Activated CD4-positive, alpha-beta T cell treated with anti-CD3 and anti-CD28 coated beads for 36 hours (primary cell): ENCODE measurements at regions of chr13 and their contacts with region 1.

Region 1: GRCh38 chr13:94549232-94550061 is 46.5 kb downstream of the TGDS start:
- DNase-seq: peak; percentile 96
- ATAC-seq: peak; percentile 94
- H3K4me3 Mint-ChIP-seq: peak overlapping the region; percentile 83
- H3K27ac Mint-ChIP-seq: peak overlapping the region; percentile 97
- H3K4me1 Mint-ChIP-seq: peaks cover 20% of the 10 kb centered on the region
- H3K27me3 Mint-ChIP-seq: peaks cover 3% of the 10 kb centered on the region

Region 2: GRCh38 chr13:94327318-94327717 is 222.1 kb before region 1 on chr13:
- CTCF ChIA-PET with region 1: no interaction called
- POLR2A ChIA-PET with region 1: no interaction called
- intact Hi-C with region 1: loop called in 1 of 2 experiments (anchors 5 kb)
- DNase-seq: no peak
- ATAC-seq: peak; percentile 53
- H3K4me3 Mint-ChIP-seq: no peak overlapping the region
- H3K27ac Mint-ChIP-seq: peak overlapping the region; percentile 37
- H3K4me1 Mint-ChIP-seq: peaks cover 64% of the 10 kb centered on the region
- H3K27me3 Mint-ChIP-seq: peaks cover 10% of the 10 kb centered on the region

Region 3: DNA sequence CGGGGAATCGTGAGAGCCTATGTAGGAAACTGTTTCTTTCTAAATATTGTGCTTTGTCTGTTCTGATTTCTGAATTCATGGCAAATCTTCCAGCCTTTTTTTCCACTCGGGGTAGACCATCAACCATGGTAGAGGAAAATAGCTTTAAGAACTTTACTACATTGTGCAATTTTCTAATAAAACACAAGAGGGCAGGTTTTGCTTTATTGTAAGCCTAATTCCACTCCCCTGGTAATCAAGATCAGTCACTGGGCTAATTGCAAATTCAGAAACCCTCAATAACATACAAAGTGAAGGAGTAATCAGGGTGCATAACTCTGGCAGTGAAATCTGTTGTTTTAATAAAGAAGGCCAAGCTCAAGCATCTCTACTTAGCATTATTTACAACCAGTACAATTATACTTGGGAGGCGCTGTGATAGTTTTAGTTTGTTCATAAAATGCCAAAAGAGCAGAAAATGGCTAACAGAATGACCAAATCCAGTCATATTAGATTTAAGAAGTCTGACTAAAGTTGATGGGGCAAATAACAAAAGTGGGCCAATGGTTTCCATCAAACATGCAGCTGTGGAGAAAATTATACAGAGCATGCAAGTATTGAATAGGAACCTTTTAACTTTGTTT is 113.7 kb before region 1 on chr13:
- CTCF ChIA-PET with region 1: interaction called, 4 read pairs
- POLR2A ChIA-PET with region 1: no interaction called
- intact Hi-C with region 1: loop called (anchors 2 to 5 kb)
- DNase-seq: no peak
- ATAC-seq: peak; percentile 65
- H3K4me3 Mint-ChIP-seq: no peak overlapping the region
- H3K27ac Mint-ChIP-seq: no peak overlapping the region
- H3K4me1 Mint-ChIP-seq: peaks cover 33% of the 10 kb centered on the region
- H3K27me3 Mint-ChIP-seq: no peaks in the 10 kb centered on the region

Region 4: DNA sequence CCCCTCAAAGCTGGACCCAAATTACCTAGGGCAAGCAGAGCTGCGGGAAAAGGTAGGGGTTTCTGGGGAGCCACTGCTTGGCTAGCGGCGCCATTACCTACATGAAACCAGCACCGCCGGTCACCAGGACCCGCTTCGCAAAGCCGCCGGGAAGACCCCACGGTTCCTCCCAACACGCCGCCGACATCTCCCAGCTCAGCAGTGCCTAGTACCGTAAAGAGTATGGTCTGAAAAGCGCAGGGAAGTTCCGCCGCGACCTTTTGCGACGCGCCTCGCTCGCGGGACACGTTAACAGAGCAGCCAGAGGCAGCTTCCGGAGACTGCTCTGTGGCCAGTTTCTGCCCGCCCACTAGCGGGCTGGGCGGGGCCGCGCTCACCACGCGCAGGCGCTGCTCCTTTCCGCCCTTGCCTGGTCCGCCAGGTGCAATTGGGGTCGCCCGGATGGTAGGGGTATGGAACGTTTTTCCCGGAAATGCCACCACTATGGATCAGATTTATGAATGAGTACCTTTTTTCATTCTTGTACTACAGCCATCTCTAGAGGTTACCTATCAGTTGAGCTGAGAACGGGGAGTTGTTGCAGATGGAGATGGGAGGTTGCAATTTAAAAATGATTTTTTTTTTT is 46.6 kb after region 1 on chr13 and contains the start of gene TGDS:
- CTCF ChIA-PET with region 1: interaction called, 5 read pairs
- POLR2A ChIA-PET with region 1: interaction called, 8 read pairs
- intact Hi-C with region 1: loop called (anchors 1 kb)
- DNase-seq: peak; percentile 95
- ATAC-seq: peak; percentile 96
- H3K4me3 Mint-ChIP-seq: peak within 1 kb of the TSS; percentile 88
- H3K27ac Mint-ChIP-seq: peak within 1 kb of the TSS; percentile 96
- H3K4me1 Mint-ChIP-seq: peaks cover 36% of the 10 kb centered on the region
- H3K27me3 Mint-ChIP-seq: no peaks in the 10 kb centered on the region
- total RNA-seq, gene TGDS: 23.4 to 24.2 TPM

Region 5: DNA sequence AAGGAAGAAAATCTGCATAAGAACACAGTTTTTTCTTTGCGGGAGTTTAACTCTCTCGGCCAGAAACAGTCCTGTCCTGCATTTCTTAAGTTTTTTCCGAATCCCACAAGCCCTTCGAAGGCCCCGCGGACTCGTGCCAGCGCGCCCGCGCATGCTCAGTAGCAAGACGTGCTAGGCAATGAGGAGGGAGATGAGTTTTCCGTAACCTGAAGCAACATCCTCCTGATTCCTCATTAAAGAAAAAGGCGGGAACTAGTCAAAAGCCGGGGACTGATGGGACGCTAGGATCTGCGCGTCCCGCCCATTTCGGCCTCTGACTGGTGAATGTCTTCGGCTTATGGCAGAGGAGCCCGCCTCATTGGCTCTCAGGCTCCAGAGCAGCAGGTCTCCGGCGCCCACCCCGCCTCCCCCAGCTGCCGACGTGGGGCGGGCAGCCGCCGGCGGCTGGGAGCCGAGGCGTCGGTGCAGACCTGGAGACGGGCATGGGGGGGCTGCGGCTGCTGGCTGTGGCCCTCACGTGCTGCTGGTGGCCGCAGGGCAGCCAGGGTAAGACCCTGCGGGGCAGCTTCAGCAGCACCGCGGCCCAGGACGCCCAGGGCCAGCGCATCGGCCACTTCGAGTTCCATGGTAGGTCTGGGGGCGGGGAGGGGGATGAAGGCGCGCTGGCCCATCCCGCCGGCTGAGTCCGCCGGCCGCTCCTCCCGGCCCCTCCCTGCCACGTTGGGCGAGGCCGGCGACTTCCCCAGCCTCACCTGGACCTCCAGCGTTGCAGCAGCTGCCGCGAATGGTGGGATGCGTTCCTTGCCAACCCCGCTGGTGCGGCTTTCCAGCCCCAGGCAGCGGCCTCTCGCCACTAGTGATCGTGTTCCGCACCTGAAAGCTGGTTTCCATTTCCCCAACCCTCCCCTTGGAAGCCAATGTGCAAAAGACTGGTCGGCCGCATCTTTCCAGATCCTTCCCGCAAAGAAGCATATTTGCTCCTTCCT is 52.3 kb after region 1 on chr13 and contains the start of gene GPR180:
- CTCF ChIA-PET with region 1: interaction called, 3 read pairs
- POLR2A ChIA-PET with region 1: interaction called, 3 read pairs
- intact Hi-C with region 1: loop called (anchors 1 kb)
- DNase-seq: peak; percentile 95
- ATAC-seq: peak; percentile 100
- H3K4me3 Mint-ChIP-seq: peak within 1 kb of the TSS; percentile 89
- H3K27ac Mint-ChIP-seq: peak within 1 kb of the TSS; percentile 77
- H3K4me1 Mint-ChIP-seq: peaks cover 31% of the 10 kb centered on the region
- H3K27me3 Mint-ChIP-seq: no peaks in the 10 kb centered on the region
- total RNA-seq, gene GPR180: 8.0 to 8.6 TPM

Region 6: DNA sequence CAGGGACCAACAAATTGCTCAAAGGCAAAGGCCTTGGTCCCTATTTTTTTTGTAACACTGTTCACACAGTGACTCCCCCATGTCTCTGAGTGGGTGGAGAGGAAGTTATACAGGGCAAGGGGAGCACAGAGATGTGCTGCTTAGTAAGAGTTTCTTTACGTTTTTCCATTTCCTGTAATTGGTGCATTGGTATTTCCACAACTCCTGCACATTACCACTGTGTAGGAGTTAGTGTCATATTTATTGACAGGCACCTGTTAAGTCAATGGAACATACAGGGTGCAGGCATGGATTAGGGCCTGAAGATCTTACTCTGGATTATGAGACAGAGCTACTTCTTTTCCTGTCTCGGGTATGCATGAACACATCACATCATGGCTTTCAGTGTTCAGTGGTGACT is 117.7 kb after region 1 on chr13:
- CTCF ChIA-PET with region 1: interaction called, 3 read pairs
- POLR2A ChIA-PET with region 1: no interaction called
- intact Hi-C with region 1: loop called in 1 of 2 experiments (anchors 5 kb)
- DNase-seq: peak; percentile 44
- ATAC-seq: peak; percentile 88
- H3K4me3 Mint-ChIP-seq: no peak overlapping the region
- H3K27ac Mint-ChIP-seq: peak overlapping the region; percentile 89
- H3K4me1 Mint-ChIP-seq: peaks cover 38% of the 10 kb centered on the region
- H3K27me3 Mint-ChIP-seq: peaks cover 21% of the 10 kb centered on the region

Region 7: GRCh38 chr13:95676762-95677563 is 1127.5 kb after region 1 on chr13 and contains the start of gene DNAJC3:
- CTCF ChIA-PET with region 1: no interaction called
- POLR2A ChIA-PET with region 1: no interaction called
- intact Hi-C with region 1: loop called in 1 of 2 experiments (anchors 2 kb)
- DNase-seq: peak; percentile 99
- ATAC-seq: peak; percentile 96
- H3K4me3 Mint-ChIP-seq: peak within 1 kb of the TSS; percentile 96
- H3K27ac Mint-ChIP-seq: peak within 1 kb of the TSS; percentile 92
- H3K4me1 Mint-ChIP-seq: peaks cover 52% of the 10 kb centered on the region
- H3K27me3 Mint-ChIP-seq: no peaks in the 10 kb centered on the region
- total RNA-seq, gene DNAJC3: 13.4 to 16.3 TPM

Region 8: GRCh38 chr13:95704510-95704909 is 1155.1 kb after region 1 on chr13:
- CTCF ChIA-PET with region 1: no interaction called
- POLR2A ChIA-PET with region 1: no interaction called
- intact Hi-C with region 1: no loop called
- DNase-seq: no peak
- ATAC-seq: no peak
- H3K4me3 Mint-ChIP-seq: no peak overlapping the region
- H3K27ac Mint-ChIP-seq: no peak overlapping the region
- H3K4me1 Mint-ChIP-seq: peaks cover 60% of the 10 kb centered on the region
- H3K27me3 Mint-ChIP-seq: no peaks in the 10 kb centered on the region